Right ventricle myocardium inferior (tissue), 1 donor: ENCODE measurements at regions of chr17 and their contacts with region 1.

Region 1: DNA sequence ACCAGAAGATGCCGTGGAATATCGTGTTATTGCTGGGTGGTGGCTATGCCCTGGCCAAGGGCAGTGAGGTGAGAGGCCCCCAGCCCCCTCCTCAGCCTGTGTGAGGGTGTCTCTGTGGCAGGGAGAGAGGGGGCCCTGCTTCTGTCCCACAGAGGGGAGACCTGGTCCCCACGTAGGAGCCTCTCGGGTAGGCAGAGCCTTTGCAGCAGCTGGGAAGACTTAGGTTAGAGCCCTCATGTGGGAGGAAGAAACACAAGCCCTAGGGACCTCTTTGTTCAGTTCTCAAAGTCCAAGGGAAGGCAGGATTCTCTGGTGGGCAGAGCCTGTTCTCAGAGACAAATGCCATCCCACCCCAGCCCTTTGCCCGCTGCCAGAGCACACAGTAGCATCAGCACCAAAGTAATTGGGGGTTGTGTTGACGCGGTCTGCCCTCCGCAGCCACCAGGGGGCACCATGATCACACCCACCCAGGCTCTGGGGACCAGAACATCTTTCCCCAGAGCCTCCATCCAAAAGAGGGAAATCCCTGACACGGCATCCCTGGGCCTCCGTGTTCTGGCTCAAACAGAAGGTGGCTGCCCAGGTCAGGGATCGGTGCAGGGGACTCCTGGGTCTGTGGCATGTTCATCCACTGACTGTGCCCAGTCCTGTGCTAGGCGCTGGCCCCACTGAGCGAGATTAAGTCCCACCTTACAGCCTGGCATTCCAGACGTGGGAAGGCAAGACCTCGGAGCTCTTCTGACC is 11.5 kb upstream of the FOXN1 start:
- DNase-seq: peak; percentile 87
- ATAC-seq: peak; percentile 62

Region 2: DNA sequence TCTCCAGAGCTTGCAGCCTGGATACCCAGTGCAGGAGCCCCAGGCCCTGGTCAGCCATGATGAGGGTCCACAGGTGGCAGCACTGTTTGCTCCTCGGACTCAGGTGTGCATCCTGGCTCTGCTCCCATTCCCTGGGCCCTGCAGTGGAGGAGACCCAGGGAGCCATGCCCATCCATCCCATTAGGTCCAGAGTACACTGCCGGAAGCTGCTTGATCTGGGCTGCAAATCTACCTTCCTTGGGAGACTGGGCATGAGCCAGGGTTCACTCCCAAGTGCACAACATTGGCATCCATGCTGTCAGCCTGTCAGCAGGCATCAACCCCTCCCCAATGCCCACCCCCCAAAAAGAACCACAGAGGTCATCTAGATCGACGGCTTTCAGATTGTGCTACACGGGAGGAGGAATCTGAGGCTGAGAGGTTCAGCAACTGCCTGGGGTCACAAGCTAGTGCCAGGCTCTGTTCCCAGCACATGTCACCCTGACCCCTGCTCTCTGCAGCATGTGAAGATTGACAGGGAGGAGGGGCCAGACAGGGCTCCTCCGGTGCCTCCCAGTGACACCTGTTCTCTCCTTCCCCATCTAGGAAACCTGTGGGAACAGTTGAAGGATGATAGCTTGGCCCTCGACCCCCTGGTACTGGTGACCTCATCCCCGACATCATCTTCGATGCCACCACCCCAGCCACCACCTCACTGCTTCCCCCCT is 42.1 kb after region 1 on chr17:
- intact Hi-C with region 1: loop called (anchors 5 kb)
- DNase-seq: no peak
- ATAC-seq: no peak

Region 3: GRCh38 chr17:28612936-28613872 is 118.6 kb after region 1 on chr17:
- intact Hi-C with region 1: loop called (anchors 2 kb)
- DNase-seq: no peak
- ATAC-seq: peak; percentile 26

Region 4: DNA sequence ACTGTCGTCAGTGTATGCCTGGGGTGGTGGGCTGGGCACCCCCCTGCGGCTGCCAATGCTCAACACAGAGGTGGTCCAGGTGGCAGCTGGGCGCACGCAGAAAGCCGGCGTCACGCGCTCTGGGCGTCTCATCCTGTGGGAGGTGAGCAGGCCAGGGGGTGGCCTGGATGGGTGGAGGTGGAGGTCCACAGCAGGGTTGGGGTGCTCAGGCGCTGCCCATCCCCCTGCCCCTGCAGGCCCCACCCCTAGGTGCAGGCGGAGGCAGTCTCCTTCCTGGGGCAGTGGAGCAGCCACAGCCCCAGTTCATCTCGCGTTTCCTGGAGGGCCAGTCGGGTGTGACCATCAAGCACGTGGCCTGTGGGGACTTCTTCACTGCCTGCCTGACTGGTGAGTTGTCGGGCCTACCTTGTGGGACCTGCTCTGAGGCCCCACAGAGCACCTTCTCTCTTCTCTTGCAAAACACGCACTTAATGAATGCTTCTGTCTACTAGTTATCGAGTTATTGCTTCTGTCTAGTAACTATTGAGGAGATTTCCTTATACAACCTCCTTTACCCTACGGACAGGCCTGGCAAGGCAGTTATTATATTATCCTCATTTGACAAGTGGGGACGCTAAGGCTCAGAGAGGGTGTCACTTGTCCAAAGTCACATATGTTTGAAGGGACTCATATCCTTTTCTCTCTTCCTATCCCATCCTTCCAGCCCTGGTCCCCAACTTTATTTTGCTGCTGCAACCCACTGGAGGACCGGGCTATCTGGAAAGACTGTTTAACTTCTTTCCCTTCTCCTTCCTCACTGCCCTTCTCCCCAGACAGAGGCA is 243.5 kb after region 1 on chr17:
- intact Hi-C with region 1: no loop called
- DNase-seq: no peak
- ATAC-seq: no peak